ENCODE measurements at regions of chr6 and their contacts with region 1.

Region 1: DNA sequence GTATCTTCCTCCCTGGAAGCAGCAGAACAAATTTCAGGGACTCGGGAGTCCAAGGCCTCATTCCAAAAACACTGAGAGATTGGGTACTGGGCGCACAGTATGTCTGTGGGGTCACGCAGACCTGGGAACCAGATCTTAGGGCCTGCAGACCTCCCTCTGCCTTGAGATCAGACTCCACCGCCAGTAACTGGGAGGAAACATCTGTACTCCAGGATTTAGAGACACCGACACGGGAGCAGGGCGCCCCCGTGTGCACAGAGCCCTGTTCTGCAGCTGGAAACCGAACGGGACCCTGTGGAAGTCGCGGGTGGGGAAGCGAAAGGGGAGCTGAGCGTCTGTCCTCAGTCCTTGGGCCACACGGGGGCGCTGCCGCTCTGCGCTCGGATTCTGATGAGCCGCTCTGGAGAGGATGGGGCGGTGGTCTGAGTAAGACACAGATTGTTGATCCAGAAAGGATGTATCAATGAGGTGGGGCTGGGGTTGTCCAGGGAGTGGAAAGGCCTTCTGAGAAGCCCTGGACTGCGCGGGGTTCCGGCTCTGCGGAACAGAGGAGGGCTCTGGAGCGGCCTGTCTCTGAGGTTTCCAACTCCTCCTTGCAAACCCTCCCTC is 35.7 kb upstream of the HLA-E start:
- DNase-seq: peak; percentile 96 to 98 (median 97)
- ATAC-seq: peak; percentile 99
- H3K4me3 ChIP-seq: no peak overlapping the region
- H3K27ac ChIP-seq: no peak overlapping the region
- H3K4me1 ChIP-seq: peaks cover 0 to 20% of the 10 kb centered on the region in 2 experiments; a peak in 2 of 5 replicates
- H3K27me3 ChIP-seq: peaks cover 50 to 61% of the 10 kb centered on the region in 2 experiments
- CTCF ChIP-seq: peak; percentile 98
- EP300 ChIP-seq: no peak
- POLR2A ChIP-seq: no peak
- RAD21 ChIP-seq: peak; percentile 85 to 95

Region 2: DNA sequence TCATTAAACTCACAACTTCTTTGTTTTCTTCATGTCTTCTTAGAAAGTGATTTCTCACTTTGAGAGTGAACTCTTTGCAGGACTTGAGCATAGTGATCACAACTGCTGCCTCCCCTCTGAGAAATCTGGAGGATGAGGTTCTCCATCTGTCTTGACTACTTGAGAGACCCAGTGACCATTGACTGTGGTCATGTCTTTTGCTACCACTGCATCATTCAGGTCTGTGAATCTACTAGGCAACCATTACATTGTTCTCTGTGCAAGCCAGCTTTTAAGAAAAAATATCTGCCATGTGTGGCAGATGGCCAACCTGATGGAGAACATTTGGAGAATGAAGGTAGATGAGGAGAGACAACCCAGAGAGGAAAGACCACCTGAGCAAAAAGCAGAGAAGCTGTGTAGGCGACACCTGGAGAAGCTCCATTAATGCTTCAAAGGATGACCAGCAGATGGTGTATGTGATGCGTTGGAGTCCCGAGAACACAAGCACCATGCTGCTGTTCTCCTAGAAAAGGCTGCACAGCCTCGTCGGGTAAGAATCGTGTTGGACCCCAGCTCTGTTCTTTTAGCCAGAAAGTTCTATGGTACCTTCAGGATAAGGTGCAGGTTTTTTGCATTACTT is 215.3 kb before region 1 on chr6:
- CTCF ChIA-PET with region 1: no interaction called
- POLR2A ChIA-PET with region 1: no interaction called
- in situ Hi-C with region 1: no loop called
- intact Hi-C with region 1: loop called (anchors 5 kb)
- DNase-seq: peak in 2 of 4 experiments; percentile 49 to 65
- ATAC-seq: peak; percentile 93
- H3K4me3 ChIP-seq: no peak overlapping the region
- H3K27ac ChIP-seq: no peak overlapping the region
- H3K4me1 ChIP-seq: no peaks in the 10 kb centered on the region
- H3K27me3 ChIP-seq: peaks cover 16 to 34% of the 10 kb centered on the region in 2 experiments; a peak in 4 of 5 replicates
- CTCF ChIP-seq: peak; percentile 73 to 82 (median 76)
- EP300 ChIP-seq: no peak
- POLR2A ChIP-seq: no peak
- RAD21 ChIP-seq: peak; percentile 67 to 93

Region 3: DNA sequence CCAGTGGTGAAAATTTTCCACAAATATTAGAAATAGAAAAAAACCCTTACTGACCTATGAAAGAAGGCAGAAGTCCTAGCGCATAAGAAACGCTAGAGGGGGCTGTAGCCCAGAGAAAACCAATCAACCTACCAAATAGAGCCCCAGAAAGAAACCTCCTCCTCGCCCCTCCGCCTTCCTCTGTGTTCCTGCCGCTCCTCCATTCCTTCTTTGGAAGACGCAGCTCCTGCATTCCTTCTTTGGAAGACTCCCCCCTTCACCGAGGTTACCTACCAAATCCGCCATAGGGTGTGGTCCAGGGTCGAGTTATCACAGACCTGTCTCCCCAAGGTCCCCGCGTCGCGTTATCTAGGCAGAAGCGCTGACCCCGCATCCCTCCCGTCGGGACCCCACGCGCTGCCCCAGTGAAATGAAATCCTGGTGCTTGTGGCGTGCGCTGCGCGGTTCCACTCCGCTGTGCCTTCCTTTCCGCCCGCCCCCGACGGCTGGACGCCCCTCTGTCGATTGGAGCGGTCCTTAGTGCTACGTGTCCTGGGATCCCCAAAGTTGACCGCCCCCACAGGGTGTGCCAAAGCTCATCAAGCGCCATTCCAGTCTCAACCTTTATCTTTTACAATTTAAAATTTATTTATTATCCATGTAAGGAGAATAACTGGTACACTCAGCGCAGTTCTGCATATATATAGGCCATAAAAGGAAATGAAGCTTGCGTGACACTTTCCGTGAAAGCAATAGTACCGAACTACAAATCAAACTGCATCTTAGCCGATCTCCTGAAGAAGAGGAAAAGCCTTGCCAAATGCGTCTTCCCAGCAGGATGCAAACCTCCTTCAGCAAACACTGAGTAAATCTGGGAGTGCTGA is 95.7 kb before region 1 on chr6:
- CTCF ChIA-PET with region 1: no interaction called
- POLR2A ChIA-PET with region 1: no interaction called
- in situ Hi-C with region 1: no loop called
- intact Hi-C with region 1: loop called (anchors 5 kb)
- DNase-seq: peak; percentile 51 to 75 (median 64)
- ATAC-seq: peak; percentile 94
- H3K4me3 ChIP-seq: no peak overlapping the region
- H3K27ac ChIP-seq: no peak overlapping the region
- H3K4me1 ChIP-seq: peaks cover 0 to 5% of the 10 kb centered on the region in 2 experiments; a peak in 3 of 5 replicates
- H3K27me3 ChIP-seq: peaks cover 27% of the 10 kb centered on the region in 2 experiments
- CTCF ChIP-seq: peak; percentile 75 to 88 (median 79)
- EP300 ChIP-seq: no peak
- POLR2A ChIP-seq: no peak
- RAD21 ChIP-seq: peak; percentile 29 to 62; a peak in 3 of 4 replicates

Region 4: DNA sequence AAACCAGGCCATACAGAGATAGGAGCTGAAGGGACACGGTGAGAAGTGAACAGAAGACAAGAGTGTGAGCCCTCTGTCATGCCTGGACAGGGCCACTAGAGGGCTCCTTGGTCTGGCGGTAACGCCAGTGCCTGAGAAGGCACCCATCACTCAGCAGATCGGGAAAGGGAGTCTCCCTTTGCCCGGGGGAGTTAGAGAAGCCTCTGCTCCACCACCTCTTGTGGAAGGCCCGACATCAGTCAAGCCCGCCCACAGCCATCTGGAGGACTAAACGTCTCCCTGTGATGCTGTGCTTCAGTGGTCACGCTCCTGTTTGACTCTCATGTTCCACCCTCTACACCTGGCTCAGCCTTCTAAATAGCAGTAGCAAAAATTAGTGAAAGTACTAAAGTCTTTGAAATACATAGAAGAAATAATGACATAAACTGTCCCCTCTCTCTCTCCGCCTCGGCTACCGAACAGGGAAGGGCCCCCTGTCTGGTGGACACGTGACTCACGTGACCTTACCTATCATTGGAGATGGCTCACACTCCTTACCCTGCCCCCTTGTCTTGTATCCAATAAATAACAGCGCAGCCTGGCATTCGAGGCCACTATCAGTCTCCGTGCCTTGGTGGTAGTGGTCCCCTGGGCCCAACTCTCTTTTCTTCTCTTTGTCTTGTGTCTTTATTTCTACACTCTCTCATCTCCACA is 42.0 kb before region 1 on chr6:
- CTCF ChIA-PET with region 1: no interaction called
- POLR2A ChIA-PET with region 1: no interaction called
- in situ Hi-C with region 1: no loop called
- intact Hi-C with region 1: loop called (anchors 1 kb)
- DNase-seq: peak; percentile 30 to 76 (median 40)
- ATAC-seq: peak; percentile 92
- H3K4me3 ChIP-seq: no peak overlapping the region
- H3K27ac ChIP-seq: no peak overlapping the region
- H3K4me1 ChIP-seq: no peaks in the 10 kb centered on the region
- H3K27me3 ChIP-seq: peaks cover 0 to 16% of the 10 kb centered on the region in 2 experiments; a peak in 2 of 5 replicates
- CTCF ChIP-seq: peak; percentile 82 to 83 (median 82)
- EP300 ChIP-seq: no peak
- POLR2A ChIP-seq: no peak
- RAD21 ChIP-seq: peak; percentile 26 to 77; a peak in 3 of 4 replicates

Region 5: GRCh38 chr6:30589754-30590358 is 136.2 kb after region 1 on chr6:
- CTCF ChIA-PET with region 1: no interaction called
- POLR2A ChIA-PET with region 1: no interaction called
- in situ Hi-C with region 1: no loop called
- intact Hi-C with region 1: no loop called
- DNase-seq: no peak
- ATAC-seq: no peak
- H3K4me3 ChIP-seq: no peak overlapping the region
- H3K27ac ChIP-seq: no peak overlapping the region; the same call in 2 of the 3 replicates
- H3K4me1 ChIP-seq: peaks cover 3 to 4% of the 10 kb centered on the region in 2 experiments; a peak in 3 of 5 replicates
- H3K27me3 ChIP-seq: no peaks in the 10 kb centered on the region
- CTCF ChIP-seq: no peak
- EP300 ChIP-seq: no peak
- POLR2A ChIP-seq: no peak
- RAD21 ChIP-seq: no peak

Region 6: GRCh38 chr6:30686908-30687658 is 233.5 kb after region 1 on chr6:
- CTCF ChIA-PET with region 1: no interaction called
- POLR2A ChIA-PET with region 1: no interaction called
- in situ Hi-C with region 1: no loop called
- intact Hi-C with region 1: no loop called
- DNase-seq: peak; percentile 90 to 96 (median 92)
- ATAC-seq: peak; percentile 59
- H3K4me3 ChIP-seq: peak overlapping the region; percentile 81
- H3K27ac ChIP-seq: peak overlapping the region; percentile 88
- H3K4me1 ChIP-seq: peaks cover 50 to 88% of the 10 kb centered on the region in 2 experiments
- H3K27me3 ChIP-seq: no peaks in the 10 kb centered on the region
- CTCF ChIP-seq: no peak
- EP300 ChIP-seq: peak; percentile 63; the same call in 1 of the 2 replicates
- POLR2A ChIP-seq: peak; percentile 76
- RAD21 ChIP-seq: no peak

Region 7: GRCh38 chr6:31426395-31427354 is 973.1 kb after region 1 on chr6:
- CTCF ChIA-PET with region 1: no interaction called
- POLR2A ChIA-PET with region 1: no interaction called
- in situ Hi-C with region 1: no loop called
- intact Hi-C with region 1: no loop called
- DNase-seq: no peak
- ATAC-seq: no peak
- H3K4me3 ChIP-seq: no peak overlapping the region
- H3K27ac ChIP-seq: no peak overlapping the region
- H3K4me1 ChIP-seq: no peaks in the 10 kb centered on the region
- H3K27me3 ChIP-seq: peaks cover 0 to 13% of the 10 kb centered on the region in 2 experiments; a peak in 2 of 5 replicates
- CTCF ChIP-seq: no peak
- EP300 ChIP-seq: no peak
- POLR2A ChIP-seq: no peak
- RAD21 ChIP-seq: no peak

Measured in K562 (cell line).